HCT116 (cell line): ENCODE measurements at regions of chr9 and their contacts with region 1.

Region 1: DNA sequence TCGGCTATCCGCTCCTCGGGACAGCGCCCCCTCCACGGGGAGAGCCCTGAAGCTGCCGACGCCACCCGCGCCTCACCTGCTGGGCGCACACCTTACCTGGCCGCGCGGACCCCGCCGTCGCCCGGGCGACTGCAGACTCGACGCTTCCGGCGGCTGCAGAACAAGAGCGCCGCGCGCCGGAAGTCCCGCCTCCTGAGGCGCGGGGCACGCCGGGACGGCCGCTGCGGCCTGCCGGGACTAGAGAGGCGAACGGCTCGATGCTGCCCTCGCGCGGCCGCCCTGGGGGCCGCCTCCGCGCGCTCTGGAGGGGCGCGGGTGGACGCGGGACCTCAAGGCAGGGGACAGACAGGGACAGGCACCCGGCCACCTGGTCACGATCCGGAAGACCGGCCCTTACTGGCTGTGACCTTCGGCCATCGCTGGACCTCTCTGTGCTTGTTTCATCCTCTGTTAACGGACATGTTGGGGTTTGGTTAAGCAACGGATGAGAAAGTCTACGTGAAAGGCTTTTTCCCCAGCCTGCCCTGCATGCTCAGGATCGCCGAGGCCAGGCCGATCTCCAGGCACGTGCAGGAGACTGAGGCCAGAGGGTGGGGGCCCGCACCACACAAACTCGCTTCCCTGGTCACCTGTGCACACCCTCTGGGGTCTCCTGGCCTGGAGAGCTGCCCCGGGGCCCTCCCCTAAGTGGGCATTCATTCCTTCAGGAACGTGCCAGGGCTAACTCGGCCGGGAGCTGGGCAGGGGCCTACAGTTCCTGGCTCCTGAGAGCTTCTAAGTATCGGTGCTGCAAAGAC is at the start of gene SNAPC4:
- DNase-seq: peak; percentile 62
- ATAC-seq: peak; percentile 92
- H3K4me3 ChIP-seq: peak within 1 kb of the TSS; percentile 82 to 93
- H3K27ac ChIP-seq: peak within 1 kb of the TSS; percentile 92
- H3K4me1 ChIP-seq: peaks cover 7 to 16% of the 10 kb centered on the region in 2 experiments
- H3K27me3 ChIP-seq: no peaks in the 10 kb centered on the region
- CTCF ChIP-seq: peak; percentile 68 to 84 (median 82); a peak in 5 of 6 replicates
- POLR2A ChIP-seq: peak; percentile 85
- RAD21 ChIP-seq: peak; percentile 85
- total RNA-seq, gene SNAPC4: 20.4 TPM

Region 2: DNA sequence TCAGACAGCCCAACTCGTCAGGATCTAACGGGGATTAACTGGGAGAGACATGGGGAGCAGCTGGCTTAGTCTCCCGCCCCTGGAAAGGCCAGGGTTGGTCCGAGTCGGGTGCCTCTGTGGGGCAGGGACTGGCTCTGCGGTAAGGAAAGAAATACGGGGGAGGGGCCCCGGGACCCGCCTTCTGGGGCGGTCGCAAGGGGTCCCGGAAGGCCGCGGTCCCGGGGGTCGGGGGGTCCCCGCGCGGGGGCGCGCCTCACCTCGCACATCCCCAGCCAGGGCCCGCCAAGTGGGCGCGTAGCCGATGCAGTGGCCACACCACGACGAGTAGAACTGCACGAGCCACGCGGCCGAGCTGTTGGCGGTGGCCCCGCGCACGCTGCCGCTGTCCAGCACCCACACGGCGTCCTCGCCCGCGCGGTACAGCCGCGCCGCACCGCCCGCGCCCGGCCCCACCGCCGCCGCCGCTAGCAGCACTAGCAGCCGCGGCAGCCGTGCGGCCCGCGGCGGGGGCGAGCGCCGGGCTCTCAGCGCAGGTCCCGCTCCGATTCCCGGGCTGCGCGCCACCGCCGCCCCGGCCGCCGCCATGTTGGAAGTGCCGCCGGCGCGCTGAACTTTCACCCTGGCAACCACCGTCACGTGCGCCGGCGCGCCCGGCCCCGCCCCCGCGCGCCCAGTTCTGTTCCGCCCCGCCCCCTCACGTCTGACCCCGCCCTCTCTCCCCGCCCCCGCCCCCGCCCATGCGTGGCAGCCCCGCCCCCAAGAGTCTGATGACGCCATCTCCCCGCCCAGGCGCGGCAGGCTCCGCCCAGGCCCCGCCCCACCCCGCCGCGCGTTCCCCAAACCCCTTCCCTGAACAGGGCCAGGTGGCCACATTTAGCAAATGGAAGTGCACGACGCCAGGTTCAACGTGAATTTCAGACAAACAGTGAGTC is 154.8 kb before region 1 on chr9 and contains the start of gene QSOX2:
- CTCF ChIA-PET with region 1: no interaction called
- POLR2A ChIA-PET with region 1: no interaction called
- RAD21 ChIA-PET with region 1: no interaction called
- intact Hi-C with region 1: no loop called
- DNase-seq: peak; percentile 54
- ATAC-seq: peak; percentile 81
- H3K4me3 ChIP-seq: peak within 1 kb of the TSS; percentile 69 to 81
- H3K27ac ChIP-seq: peak within 1 kb of the TSS; percentile 76
- H3K4me1 ChIP-seq: peaks cover 16 to 24% of the 10 kb centered on the region in 2 experiments
- H3K27me3 ChIP-seq: no peaks in the 10 kb centered on the region
- CTCF ChIP-seq: no peak
- POLR2A ChIP-seq: no peak
- RAD21 ChIP-seq: no peak
- total RNA-seq, gene QSOX2: 34.6 TPM

Region 3: DNA sequence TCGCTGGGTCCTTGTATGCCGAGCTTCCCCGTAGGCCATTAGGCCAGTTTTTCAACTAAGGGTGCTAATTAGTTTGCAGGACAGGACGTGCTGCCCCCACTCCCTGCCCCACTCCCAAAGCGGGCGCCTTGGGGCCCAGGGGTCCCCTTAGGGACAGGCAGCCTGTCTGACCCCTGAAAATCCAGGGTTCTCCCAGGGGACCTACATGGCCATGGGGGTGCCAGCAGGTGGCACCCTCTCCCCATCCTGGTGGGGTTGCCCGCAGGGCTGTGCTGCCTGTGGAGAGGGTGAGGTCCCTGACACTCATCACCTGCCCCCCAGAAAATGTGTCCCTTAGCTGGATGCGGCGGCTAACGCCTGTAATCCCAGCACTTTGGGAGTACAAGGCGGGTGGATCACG is 87.8 kb before region 1 on chr9:
- CTCF ChIA-PET with region 1: interaction called, 3 read pairs
- POLR2A ChIA-PET with region 1: no interaction called
- RAD21 ChIA-PET with region 1: no interaction called
- intact Hi-C with region 1: loop called (anchors 1 kb)
- DNase-seq: no peak
- ATAC-seq: peak; percentile 69
- H3K4me3 ChIP-seq: no peak overlapping the region
- H3K27ac ChIP-seq: peak overlapping the region; percentile 70; the same call in 1 of the 2 replicates
- H3K4me1 ChIP-seq: peaks cover 13 to 19% of the 10 kb centered on the region in 2 experiments
- H3K27me3 ChIP-seq: no peaks in the 10 kb centered on the region
- CTCF ChIP-seq: peak; percentile 63 to 73 (median 67); a peak in 5 of 6 replicates
- POLR2A ChIP-seq: no peak
- RAD21 ChIP-seq: peak; percentile 87

Region 4: GRCh38 chr9:136339173-136339957 is 60.9 kb before region 1 on chr9:
- CTCF ChIA-PET with region 1: no interaction called
- POLR2A ChIA-PET with region 1: no interaction called
- RAD21 ChIA-PET with region 1: no interaction called
- intact Hi-C with region 1: loop called (anchors 2 kb)
- DNase-seq: no peak
- ATAC-seq: peak; percentile 87
- H3K4me3 ChIP-seq: no peak overlapping the region
- H3K27ac ChIP-seq: no peak overlapping the region
- H3K4me1 ChIP-seq: peaks cover 6 to 14% of the 10 kb centered on the region in 2 experiments; a peak in 3 of 4 replicates
- H3K27me3 ChIP-seq: no peaks in the 10 kb centered on the region
- CTCF ChIP-seq: peak in 2 of 3 experiments; percentile 99; a peak in 4 of 6 replicates
- POLR2A ChIP-seq: no peak
- RAD21 ChIP-seq: no peak

Region 5: GRCh38 chr9:136345281-136346156 is 54.7 kb before region 1 on chr9:
- CTCF ChIA-PET with region 1: interaction called, 7 read pairs
- POLR2A ChIA-PET with region 1: no interaction called
- RAD21 ChIA-PET with region 1: no interaction called
- intact Hi-C with region 1: loop called (anchors 1 kb)
- DNase-seq: no peak
- ATAC-seq: peak; percentile 79
- H3K4me3 ChIP-seq: peak overlapping the region in 1 of 2 experiments; percentile 18; a peak in 1 of 4 replicates
- H3K27ac ChIP-seq: peak overlapping the region; percentile 44; the same call in 1 of the 2 replicates
- H3K4me1 ChIP-seq: peaks cover 18 to 36% of the 10 kb centered on the region in 2 experiments; a peak in 3 of 4 replicates
- H3K27me3 ChIP-seq: no peaks in the 10 kb centered on the region
- CTCF ChIP-seq: peak in 2 of 3 experiments; percentile 46 to 53; a peak in 4 of 6 replicates
- POLR2A ChIP-seq: no peak
- RAD21 ChIP-seq: no peak

Region 6: GRCh38 chr9:136885950-136886578 is 485.8 kb after region 1 on chr9 and contains the start of gene TRAF2:
- CTCF ChIA-PET with region 1: no interaction called
- POLR2A ChIA-PET with region 1: no interaction called
- RAD21 ChIA-PET with region 1: no interaction called
- intact Hi-C with region 1: no loop called
- DNase-seq: peak; percentile 98
- ATAC-seq: peak; percentile 96
- H3K4me3 ChIP-seq: peak within 1 kb of the TSS; percentile 79 to 91
- H3K27ac ChIP-seq: peak within 1 kb of the TSS; percentile 88
- H3K4me1 ChIP-seq: peaks cover 25 to 39% of the 10 kb centered on the region in 2 experiments
- H3K27me3 ChIP-seq: no peaks in the 10 kb centered on the region
- CTCF ChIP-seq: no peak
- POLR2A ChIP-seq: peak; percentile 71
- RAD21 ChIP-seq: no peak
- total RNA-seq, gene TRAF2: 28.4 TPM